GM12878 (cell line): ENCODE measurements at regions of chr4 and their contacts with region 1.

Region 1: GRCh38 chr4:78749972-78750727 is 26.0 kb upstream of the BMP2K start:
- DNase-seq: peak; percentile 97
- ATAC-seq: peak; percentile 93
- H3K4me3 ChIP-seq: no peak overlapping the region
- H3K27ac ChIP-seq: peak overlapping the region; percentile 66
- H3K4me1 ChIP-seq: peaks cover 42% of the 10 kb centered on the region
- H3K27me3 ChIP-seq: no peaks in the 10 kb centered on the region
- CTCF ChIP-seq: no peak
- EP300 ChIP-seq: peak; percentile 93 to 97
- POLR2A ChIP-seq: no peak
- RAD21 ChIP-seq: no peak

Region 2: GRCh38 chr4:78584863-78585547 is 165.1 kb before region 1 on chr4:
- CTCF ChIA-PET with region 1: no interaction called
- POLR2A ChIA-PET with region 1: no interaction called
- RAD21 ChIA-PET with region 1: no interaction called
- SMC1A ChIA-PET with region 1: no interaction called
- in situ Hi-C with region 1: no loop called
- intact Hi-C with region 1: no loop called
- DNase-seq: no peak
- ATAC-seq: no peak
- H3K4me3 ChIP-seq: no peak overlapping the region
- H3K27ac ChIP-seq: no peak overlapping the region
- H3K4me1 ChIP-seq: no peaks in the 10 kb centered on the region
- H3K27me3 ChIP-seq: no peaks in the 10 kb centered on the region
- CTCF ChIP-seq: no peak
- EP300 ChIP-seq: no peak
- POLR2A ChIP-seq: no peak
- RAD21 ChIP-seq: no peak

Region 3: GRCh38 chr4:78638337-78639172 is 111.6 kb before region 1 on chr4:
- CTCF ChIA-PET with region 1: interaction called, 19 read pairs
- POLR2A ChIA-PET with region 1: no interaction called
- RAD21 ChIA-PET with region 1: interaction called, 9 read pairs
- SMC1A ChIA-PET with region 1: interaction called, 32 read pairs
- in situ Hi-C with region 1: no loop called
- intact Hi-C with region 1: no loop called
- DNase-seq: peak; percentile 86
- ATAC-seq: peak; percentile 78
- H3K4me3 ChIP-seq: no peak overlapping the region; the same call in 1 of the 2 replicates
- H3K27ac ChIP-seq: peak overlapping the region; percentile 62
- H3K4me1 ChIP-seq: peaks cover 57% of the 10 kb centered on the region
- H3K27me3 ChIP-seq: no peaks in the 10 kb centered on the region
- CTCF ChIP-seq: no peak
- EP300 ChIP-seq: peak; percentile 79; a peak in 3 of 4 replicates
- POLR2A ChIP-seq: no peak
- RAD21 ChIP-seq: no peak

Region 4: DNA sequence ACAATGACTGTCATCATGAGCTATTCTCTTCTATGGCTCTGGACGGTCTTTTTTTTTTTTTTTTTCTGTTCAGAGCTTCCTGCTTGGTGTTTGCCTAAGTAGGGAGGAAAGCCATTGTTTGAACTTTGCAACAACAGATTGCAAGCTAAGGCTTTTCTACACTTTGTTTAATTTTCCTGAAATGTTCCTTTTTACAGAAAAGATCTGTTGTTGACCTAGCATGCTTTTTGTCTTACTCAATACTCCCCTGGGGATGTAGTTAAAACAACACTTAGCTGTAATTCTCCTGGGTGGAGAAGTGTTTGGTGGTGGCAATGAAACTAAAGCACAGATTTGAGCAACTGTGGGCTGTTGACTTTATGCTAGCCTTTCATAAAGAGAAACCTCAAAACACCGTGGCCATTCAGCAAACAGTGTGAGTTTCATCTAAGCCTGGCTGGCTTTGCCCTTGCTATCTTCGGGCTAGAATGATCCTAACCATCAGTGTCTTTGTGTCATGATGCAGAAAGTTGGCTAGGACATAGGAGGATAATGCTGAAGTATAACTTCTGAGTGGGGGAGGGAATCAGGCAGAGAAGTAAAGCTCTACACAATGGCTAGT is 88.1 kb before region 1 on chr4:
- CTCF ChIA-PET with region 1: interaction called, 3 read pairs
- POLR2A ChIA-PET with region 1: no interaction called
- RAD21 ChIA-PET with region 1: interaction called, 3 read pairs
- SMC1A ChIA-PET with region 1: interaction called, 5 read pairs
- in situ Hi-C with region 1: no loop called
- intact Hi-C with region 1: loop called (anchors 1 kb)
- DNase-seq: peak; percentile 77
- ATAC-seq: peak; percentile 90
- H3K4me3 ChIP-seq: no peak overlapping the region
- H3K27ac ChIP-seq: no peak overlapping the region
- H3K4me1 ChIP-seq: peaks cover 33% of the 10 kb centered on the region
- H3K27me3 ChIP-seq: peaks cover 0 to 1% of the 10 kb centered on the region in 2 experiments; a peak in 1 of 4 replicates
- CTCF ChIP-seq: no peak
- EP300 ChIP-seq: peak in 1 of 2 experiments; percentile 64; a peak in 1 of 4 replicates
- POLR2A ChIP-seq: no peak
- RAD21 ChIP-seq: no peak

Region 5: GRCh38 chr4:78766650-78767049 is 16.5 kb after region 1 on chr4:
- CTCF ChIA-PET with region 1: interaction called, 16 read pairs
- POLR2A ChIA-PET with region 1: interaction called, 7 read pairs
- RAD21 ChIA-PET with region 1: interaction called, 25 read pairs
- SMC1A ChIA-PET with region 1: interaction called, 28 read pairs
- in situ Hi-C with region 1: no loop called
- intact Hi-C with region 1: loop called (anchors 2 kb)
- DNase-seq: no peak
- ATAC-seq: peak; percentile 92
- H3K4me3 ChIP-seq: peak overlapping the region; percentile 14; the same call in 1 of the 2 replicates
- H3K27ac ChIP-seq: no peak overlapping the region
- H3K4me1 ChIP-seq: peaks cover 27% of the 10 kb centered on the region
- H3K27me3 ChIP-seq: no peaks in the 10 kb centered on the region
- CTCF ChIP-seq: no peak
- EP300 ChIP-seq: no peak
- POLR2A ChIP-seq: no peak
- RAD21 ChIP-seq: no peak

Region 6: DNA sequence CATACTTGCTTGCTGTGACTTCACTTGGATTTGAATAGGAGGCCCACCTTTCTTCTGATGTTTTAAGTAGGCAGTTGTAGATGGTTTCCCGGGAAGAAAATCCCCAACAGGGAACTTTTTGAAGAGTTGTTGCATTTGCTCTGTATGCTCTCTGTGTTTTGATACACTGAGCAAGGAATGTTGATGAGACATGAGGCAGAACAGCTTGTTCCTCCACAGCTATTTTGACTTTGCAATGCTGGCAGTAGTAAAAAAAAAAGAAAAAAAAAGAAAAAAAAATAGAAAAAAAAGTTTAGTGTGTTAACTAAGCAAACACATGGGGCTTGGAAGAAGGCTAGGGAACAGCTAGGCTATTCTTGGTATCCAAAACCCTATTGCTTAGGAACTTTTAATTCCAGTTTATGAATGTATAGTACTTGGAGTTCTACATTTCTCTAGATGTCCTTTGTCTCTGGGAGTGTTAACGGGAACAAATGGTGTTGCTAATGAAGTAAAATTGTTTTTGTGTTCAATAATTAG is 212.5 kb after region 1 on chr4:
- CTCF ChIA-PET with region 1: no interaction called
- POLR2A ChIA-PET with region 1: no interaction called
- RAD21 ChIA-PET with region 1: no interaction called
- SMC1A ChIA-PET with region 1: no interaction called
- in situ Hi-C with region 1: no loop called
- intact Hi-C with region 1: no loop called
- DNase-seq: no peak
- ATAC-seq: no peak
- H3K4me3 ChIP-seq: no peak overlapping the region
- H3K27ac ChIP-seq: no peak overlapping the region
- H3K4me1 ChIP-seq: no peaks in the 10 kb centered on the region
- H3K27me3 ChIP-seq: no peaks in the 10 kb centered on the region
- CTCF ChIP-seq: no peak
- EP300 ChIP-seq: no peak
- POLR2A ChIP-seq: no peak
- RAD21 ChIP-seq: no peak

Region 7: GRCh38 chr4:80072744-80073472 is 1322.8 kb after region 1 on chr4 and contains the start of gene ANTXR2:
- CTCF ChIA-PET with region 1: no interaction called
- POLR2A ChIA-PET with region 1: no interaction called
- RAD21 ChIA-PET with region 1: no interaction called
- SMC1A ChIA-PET with region 1: no interaction called
- in situ Hi-C with region 1: loop called (anchors 25 kb)
- intact Hi-C with region 1: no loop called
- DNase-seq: peak; percentile 41
- ATAC-seq: peak; percentile 81
- H3K4me3 ChIP-seq: peak within 1 kb of the TSS; percentile 95
- H3K27ac ChIP-seq: peak within 1 kb of the TSS; percentile 70
- H3K4me1 ChIP-seq: peaks cover 48% of the 10 kb centered on the region
- H3K27me3 ChIP-seq: no peaks in the 10 kb centered on the region
- CTCF ChIP-seq: no peak
- EP300 ChIP-seq: 0 out of 4 replicates have a peak, but pooled peaks of 1 of the 2 experiments have one; percentile 7
- POLR2A ChIP-seq: peak; percentile 69
- RAD21 ChIP-seq: no peak
- polyA plus RNA-seq, gene ANTXR2: 1.4 to 1.5 TPM